PC-9 (cell line): ENCODE measurements at regions of chr6 and their contacts with region 1.

Region 1: GRCh38 chr6:16319813-16320532 is 81.6 kb downstream of the GMPR start:
- DNase-seq: peak; percentile 61 to 68
- H3K4me3 ChIP-seq: peak overlapping the region; percentile 29; the same call in 1 of the 2 replicates
- H3K27ac ChIP-seq: no peak overlapping the region
- H3K4me1 ChIP-seq: peaks cover 16% of the 10 kb centered on the region
- H3K27me3 ChIP-seq: no peaks in the 10 kb centered on the region
- CTCF ChIP-seq: no peak

Region 2: DNA sequence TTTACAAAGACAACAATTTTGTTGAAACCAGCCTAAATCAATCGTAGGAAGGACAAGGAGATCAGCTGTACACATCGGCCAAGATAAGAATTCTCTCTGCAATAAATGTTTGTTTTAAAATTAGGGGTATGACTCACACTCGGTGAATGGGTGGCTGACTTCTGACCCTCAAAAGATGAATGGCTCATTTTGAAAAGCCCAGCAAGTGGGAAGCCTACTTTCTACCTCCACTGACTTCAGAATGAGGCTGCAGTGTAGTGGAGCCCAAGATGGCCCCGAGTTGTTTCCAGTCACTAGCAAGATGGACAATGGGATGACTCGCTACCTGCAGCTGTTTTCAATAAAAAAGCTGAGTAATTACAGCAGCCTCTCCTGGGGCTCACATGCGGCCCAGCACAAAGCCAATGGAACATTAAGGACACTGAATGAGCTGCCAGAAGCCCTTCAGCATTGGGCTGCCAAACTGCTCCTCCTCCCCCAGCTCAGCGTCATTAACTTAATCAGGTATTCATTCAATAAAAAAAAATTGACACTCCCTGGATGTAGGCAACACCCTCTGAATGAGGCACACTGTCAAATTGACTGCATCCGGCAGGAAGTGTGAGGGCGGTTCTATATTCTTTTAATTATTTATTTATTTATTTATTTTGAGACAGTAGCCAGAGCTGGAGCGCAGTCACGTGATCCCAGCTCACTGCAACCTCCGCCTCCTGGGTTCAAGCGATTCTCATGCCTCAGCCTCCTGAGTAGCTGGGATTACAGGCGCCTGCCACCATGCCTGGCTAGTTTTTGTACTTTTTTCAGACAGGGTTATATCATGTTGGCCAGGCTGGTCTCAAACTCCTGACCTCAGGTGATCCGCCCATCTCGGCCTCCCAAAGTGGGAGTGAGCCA is 25.7 kb after region 1 on chr6:
- CTCF ChIA-PET with region 1: no interaction called
- POLR2A ChIA-PET with region 1: no interaction called
- intact Hi-C with region 1: loop called (anchors 1 kb)
- DNase-seq: peak; percentile 29 to 80
- H3K4me3 ChIP-seq: peak overlapping the region; percentile 1; the same call in 1 of the 2 replicates
- H3K27ac ChIP-seq: peak overlapping the region; percentile 52
- H3K4me1 ChIP-seq: peaks cover 21% of the 10 kb centered on the region
- H3K27me3 ChIP-seq: no peaks in the 10 kb centered on the region
- CTCF ChIP-seq: no peak